ENCODE measurements at regions of chr11 and their contacts with region 1.

Region 1: DNA sequence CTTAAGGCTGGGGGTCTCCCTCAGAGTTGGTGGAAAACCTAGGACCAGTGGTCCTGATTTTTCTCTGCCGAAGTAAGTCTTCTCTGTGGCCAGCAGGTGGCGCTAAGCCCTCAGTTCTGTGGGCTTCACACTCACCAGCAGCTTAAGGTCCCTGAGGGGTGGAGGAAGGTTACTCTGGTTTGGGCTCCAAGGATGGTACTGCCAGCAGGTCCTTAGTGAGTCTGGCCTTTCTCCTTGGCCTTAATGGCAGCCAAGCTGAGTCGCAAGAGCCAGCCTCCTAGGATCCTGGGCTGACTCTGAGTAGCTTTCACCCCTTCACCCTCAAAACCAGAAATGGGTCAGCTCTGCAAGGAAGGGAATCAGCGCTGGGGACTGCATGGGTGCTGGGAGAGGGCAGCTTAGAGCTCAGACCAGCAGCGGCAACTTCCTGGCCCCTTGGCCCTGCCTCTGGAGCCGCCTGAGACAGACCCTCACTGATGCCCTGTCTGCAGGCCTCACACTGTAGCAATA is 4.4 kb downstream of the KCNJ11 start:
- DNase-seq: peak; percentile 91
- H3K4me3 ChIP-seq: no peak overlapping the region
- H3K27ac ChIP-seq: no peak overlapping the region
- H3K4me1 ChIP-seq: peaks cover 11% of the 10 kb centered on the region
- CTCF ChIP-seq: peak; percentile 91

Region 2: GRCh38 chr11:16326679-16327297 is 1057.3 kb before region 1 on chr11:
- CTCF ChIA-PET with region 1: no interaction called
- POLR2A ChIA-PET with region 1: no interaction called
- intact Hi-C with region 1: no loop called
- DNase-seq: no peak
- H3K4me3 ChIP-seq: no peak overlapping the region
- H3K27ac ChIP-seq: no peak overlapping the region
- H3K4me1 ChIP-seq: no peaks in the 10 kb centered on the region
- CTCF ChIP-seq: no peak

Region 3: DNA sequence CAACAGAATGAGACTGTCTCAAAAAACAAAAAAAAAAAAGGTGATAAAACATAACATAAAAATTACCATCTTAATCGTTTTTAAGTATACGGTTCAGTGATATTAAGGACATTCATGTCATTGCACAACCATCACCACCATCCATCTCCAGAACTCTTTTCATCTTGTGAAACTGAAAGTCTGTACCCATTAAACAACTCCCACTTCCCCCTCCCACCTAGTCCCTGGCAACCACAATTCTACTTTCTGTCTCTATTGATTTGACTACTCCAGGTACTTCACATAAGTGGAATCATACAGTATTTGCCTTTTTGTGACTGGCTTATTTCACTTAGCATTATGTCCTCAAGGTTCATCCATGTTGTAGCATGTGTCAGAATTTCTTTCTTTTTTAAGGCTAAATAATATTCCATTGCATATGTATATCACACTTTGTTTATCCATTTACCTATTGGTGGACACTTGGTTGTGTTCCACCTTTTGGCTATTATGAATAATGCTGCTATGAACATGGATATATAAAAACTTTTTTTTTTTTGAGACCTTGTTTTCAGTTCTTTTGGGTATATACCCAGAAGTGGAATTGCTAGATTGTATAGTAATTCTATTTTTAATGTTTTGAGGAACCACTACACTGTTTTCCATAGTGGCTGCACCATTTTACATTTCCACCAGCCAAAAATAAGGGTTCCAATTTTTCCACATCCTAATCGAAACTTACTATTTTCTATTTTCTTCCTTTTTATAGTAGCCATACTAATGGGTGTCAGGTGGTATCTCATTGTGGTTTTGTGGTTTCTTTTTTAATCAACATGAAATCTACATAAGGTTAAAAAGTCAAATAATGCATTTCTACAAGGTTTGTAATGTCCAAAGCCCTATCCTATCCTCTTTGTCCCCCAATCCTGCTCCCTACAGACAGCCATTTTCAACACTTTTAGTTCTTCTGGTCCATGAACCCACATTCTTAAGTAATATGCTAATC is 152.9 kb before region 1 on chr11:
- CTCF ChIA-PET with region 1: no interaction called
- POLR2A ChIA-PET with region 1: no interaction called
- intact Hi-C with region 1: loop called (anchors 1 kb)
- DNase-seq: peak; percentile 27
- H3K4me3 ChIP-seq: no peak overlapping the region
- H3K27ac ChIP-seq: no peak overlapping the region
- H3K4me1 ChIP-seq: peaks cover 20% of the 10 kb centered on the region
- CTCF ChIP-seq: no peak

Region 4: DNA sequence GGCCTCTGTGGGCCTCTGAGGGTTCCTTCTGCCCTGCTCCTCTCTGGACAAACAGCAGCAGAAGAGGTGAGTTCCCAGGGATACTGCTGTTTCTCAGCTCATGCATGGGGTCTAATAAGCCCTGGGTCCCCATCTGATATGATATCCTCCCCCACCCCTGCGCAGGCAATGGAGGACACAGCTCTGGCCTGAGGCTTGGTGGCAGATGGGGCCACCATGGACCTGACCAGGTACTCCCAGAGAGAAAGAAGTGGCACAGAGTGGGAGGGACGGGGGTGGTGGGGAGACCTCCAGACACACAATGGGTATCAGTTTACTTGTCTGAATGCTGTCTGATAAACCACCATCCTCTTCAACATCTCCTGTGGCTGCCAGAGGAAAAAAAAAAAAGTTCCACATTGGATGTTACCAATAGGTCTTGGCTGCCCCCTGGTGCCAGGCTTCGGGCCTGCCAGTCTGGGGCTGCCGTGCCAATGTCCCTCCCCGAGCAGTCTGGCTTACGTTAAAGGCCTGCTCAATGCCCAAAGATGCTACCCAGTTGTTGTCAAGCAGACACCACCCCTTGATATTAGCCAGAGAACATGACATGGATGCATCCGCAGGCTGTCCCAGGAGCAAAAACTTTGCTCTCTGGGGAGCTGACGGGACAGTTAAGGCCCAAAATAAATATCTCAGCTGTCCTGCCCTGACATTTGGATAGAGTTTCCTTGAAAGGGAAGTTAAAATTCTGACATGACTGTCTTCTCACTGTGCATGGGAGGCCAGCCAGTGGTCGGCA is 120.5 kb after region 1 on chr11:
- CTCF ChIA-PET with region 1: interaction called, 6 read pairs
- POLR2A ChIA-PET with region 1: interaction called, 3 read pairs
- intact Hi-C with region 1: loop called (anchors 1 kb)
- DNase-seq: peak; percentile 81
- H3K4me3 ChIP-seq: no peak overlapping the region
- H3K27ac ChIP-seq: no peak overlapping the region
- H3K4me1 ChIP-seq: no peaks in the 10 kb centered on the region
- CTCF ChIP-seq: peak; percentile 94

Region 5: DNA sequence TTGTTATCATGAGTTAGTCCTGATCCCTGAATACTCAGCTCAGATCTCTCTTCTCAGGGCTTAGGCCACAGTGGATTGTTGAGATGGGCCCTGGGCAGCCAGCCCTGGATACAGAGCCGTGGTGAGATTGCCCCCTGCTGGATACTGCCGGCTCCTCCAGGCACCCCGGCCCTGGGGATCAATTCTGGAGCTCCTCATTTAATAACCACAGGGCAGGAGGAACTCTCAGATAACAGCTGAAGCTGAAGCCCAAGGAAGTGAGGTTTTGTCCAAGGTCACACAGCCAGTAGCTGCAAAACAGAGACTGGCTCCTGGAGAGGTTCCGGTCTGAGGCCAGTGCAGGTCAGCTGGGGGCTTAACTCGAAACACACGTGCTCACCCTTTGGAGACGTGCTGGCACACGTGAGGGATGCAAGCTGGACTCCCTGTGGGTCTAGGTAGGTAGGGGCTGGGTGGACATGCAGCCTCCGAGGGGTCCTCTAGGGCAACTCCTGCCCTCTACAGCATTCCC is 144.2 kb after region 1 on chr11:
- CTCF ChIA-PET with region 1: interaction called, 14 read pairs
- POLR2A ChIA-PET with region 1: interaction called, 3 read pairs
- intact Hi-C with region 1: loop called (anchors 1 kb)
- DNase-seq: peak; percentile 51
- H3K4me3 ChIP-seq: no peak overlapping the region
- H3K27ac ChIP-seq: no peak overlapping the region
- H3K4me1 ChIP-seq: no peaks in the 10 kb centered on the region
- CTCF ChIP-seq: peak; percentile 89